B cell (primary cell): ENCODE measurements at regions of chr7 and their contacts with region 1.

Region 1: DNA sequence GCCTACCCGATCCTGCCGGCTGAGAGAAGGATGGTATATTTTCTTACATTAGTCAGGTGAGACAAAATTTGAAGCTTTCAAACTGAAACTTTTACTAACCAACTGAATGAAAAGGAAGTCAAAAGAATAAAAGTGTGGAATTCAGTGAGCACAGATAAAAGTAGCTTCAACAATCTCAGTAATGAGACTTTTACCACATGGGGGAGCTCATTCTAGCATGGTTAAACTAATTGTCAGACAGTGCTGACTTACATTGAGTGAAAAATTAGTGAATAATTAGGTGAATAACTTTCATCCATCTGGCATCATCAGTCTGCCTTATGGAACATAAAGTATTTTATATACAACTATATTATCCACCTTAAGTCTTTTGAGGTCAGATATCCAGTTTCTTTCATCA is 8.4 kb downstream of the FAM237B start:
- DNase-seq: peak; percentile 14
- ATAC-seq: peak; percentile 43
- H3K4me3 ChIP-seq: no peak overlapping the region
- H3K4me3 Mint-ChIP-seq: no peak overlapping the region
- H3K27ac ChIP-seq: no peak overlapping the region
- H3K27ac Mint-ChIP-seq: no peak overlapping the region
- H3K4me1 ChIP-seq: no peaks in the 10 kb centered on the region
- H3K4me1 Mint-ChIP-seq: no peaks in the 10 kb centered on the region
- H3K27me3 ChIP-seq: no peaks in the 10 kb centered on the region
- H3K27me3 Mint-ChIP-seq: peaks cover 21% of the 10 kb centered on the region
- CTCF ChIP-seq: no peak

Region 2: DNA sequence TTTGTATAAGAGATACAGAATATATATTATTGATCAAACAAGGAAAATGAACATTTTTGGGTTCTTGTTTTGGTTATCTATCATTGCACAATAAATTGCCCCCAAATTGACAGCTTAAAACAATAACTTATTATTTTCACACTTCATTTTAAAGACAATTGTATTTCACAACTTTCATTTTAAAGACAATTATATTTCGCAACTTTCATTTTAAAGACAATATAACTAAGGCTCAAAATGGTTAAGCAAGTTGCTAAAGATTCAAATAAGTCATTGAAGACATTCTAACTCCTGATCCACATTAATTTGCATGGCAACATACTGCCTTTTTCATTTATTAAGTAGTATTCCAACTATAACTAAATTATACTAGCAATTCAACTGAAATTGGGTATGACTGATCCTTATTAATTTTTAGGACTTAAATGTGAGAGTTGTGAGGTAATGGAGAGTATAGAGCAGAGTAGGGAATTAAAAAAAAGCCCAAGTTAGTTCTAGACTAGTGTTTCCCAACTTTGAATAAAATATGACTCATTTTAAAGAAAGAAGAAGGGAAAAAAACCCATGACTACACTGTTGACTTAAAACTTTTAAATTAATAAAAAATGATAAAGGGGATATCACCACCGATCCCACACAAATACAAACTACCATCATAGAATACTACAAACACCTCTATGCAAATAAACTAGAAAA is 111.1 kb before region 1 on chr7:
- CTCF ChIA-PET with region 1: no interaction called
- POLR2A ChIA-PET with region 1: no interaction called
- intact Hi-C with region 1: no loop called
- DNase-seq: no peak
- ATAC-seq: no peak
- H3K4me3 ChIP-seq: no peak overlapping the region
- H3K4me3 Mint-ChIP-seq: no peak overlapping the region
- H3K27ac ChIP-seq: no peak overlapping the region
- H3K27ac Mint-ChIP-seq: no peak overlapping the region
- H3K4me1 ChIP-seq: no peaks in the 10 kb centered on the region
- H3K4me1 Mint-ChIP-seq: no peaks in the 10 kb centered on the region
- H3K27me3 ChIP-seq: peaks cover 0 to 3% (median 0%) of the 10 kb centered on the region in 4 experiments
- H3K27me3 Mint-ChIP-seq: no peaks in the 10 kb centered on the region
- CTCF ChIP-seq: no peak

Region 3: GRCh38 chr7:90334193-90334843 is 21.6 kb after region 1 on chr7:
- CTCF ChIA-PET with region 1: no interaction called
- POLR2A ChIA-PET with region 1: no interaction called
- intact Hi-C with region 1: no loop called
- DNase-seq: no peak
- ATAC-seq: no peak
- H3K4me3 ChIP-seq: no peak overlapping the region
- H3K4me3 Mint-ChIP-seq: no peak overlapping the region
- H3K27ac ChIP-seq: no peak overlapping the region
- H3K27ac Mint-ChIP-seq: no peak overlapping the region
- H3K4me1 ChIP-seq: no peaks in the 10 kb centered on the region
- H3K4me1 Mint-ChIP-seq: no peaks in the 10 kb centered on the region
- H3K27me3 ChIP-seq: no peaks in the 10 kb centered on the region
- H3K27me3 Mint-ChIP-seq: peaks cover 7% of the 10 kb centered on the region
- CTCF ChIP-seq: no peak

Region 4: GRCh38 chr7:90412458-90413184 is 99.9 kb after region 1 on chr7:
- CTCF ChIA-PET with region 1: interaction called, 20 read pairs
- POLR2A ChIA-PET with region 1: no interaction called
- intact Hi-C with region 1: loop called (anchors 1 kb)
- DNase-seq: peak; percentile 28
- ATAC-seq: peak; percentile 58
- H3K4me3 ChIP-seq: no peak overlapping the region
- H3K4me3 Mint-ChIP-seq: no peak overlapping the region
- H3K27ac ChIP-seq: no peak overlapping the region
- H3K27ac Mint-ChIP-seq: no peak overlapping the region
- H3K4me1 ChIP-seq: no peaks in the 10 kb centered on the region
- H3K4me1 Mint-ChIP-seq: no peaks in the 10 kb centered on the region
- H3K27me3 ChIP-seq: no peaks in the 10 kb centered on the region
- H3K27me3 Mint-ChIP-seq: no peaks in the 10 kb centered on the region
- CTCF ChIP-seq: no peak

Region 5: GRCh38 chr7:90424720-90425119 is 112.0 kb after region 1 on chr7:
- CTCF ChIA-PET with region 1: interaction called, 79 read pairs
- POLR2A ChIA-PET with region 1: no interaction called
- intact Hi-C with region 1: loop called (anchors 1 kb)
- DNase-seq: no peak
- ATAC-seq: no peak
- H3K4me3 ChIP-seq: no peak overlapping the region
- H3K4me3 Mint-ChIP-seq: no peak overlapping the region
- H3K27ac ChIP-seq: no peak overlapping the region
- H3K27ac Mint-ChIP-seq: no peak overlapping the region
- H3K4me1 ChIP-seq: no peaks in the 10 kb centered on the region
- H3K4me1 Mint-ChIP-seq: no peaks in the 10 kb centered on the region
- H3K27me3 ChIP-seq: no peaks in the 10 kb centered on the region
- H3K27me3 Mint-ChIP-seq: peaks cover 3% of the 10 kb centered on the region
- CTCF ChIP-seq: no peak